Psoas muscle (tissue), 8 donors: ENCODE measurements at regions of chr17 and their contacts with region 1.

Region 1: DNA sequence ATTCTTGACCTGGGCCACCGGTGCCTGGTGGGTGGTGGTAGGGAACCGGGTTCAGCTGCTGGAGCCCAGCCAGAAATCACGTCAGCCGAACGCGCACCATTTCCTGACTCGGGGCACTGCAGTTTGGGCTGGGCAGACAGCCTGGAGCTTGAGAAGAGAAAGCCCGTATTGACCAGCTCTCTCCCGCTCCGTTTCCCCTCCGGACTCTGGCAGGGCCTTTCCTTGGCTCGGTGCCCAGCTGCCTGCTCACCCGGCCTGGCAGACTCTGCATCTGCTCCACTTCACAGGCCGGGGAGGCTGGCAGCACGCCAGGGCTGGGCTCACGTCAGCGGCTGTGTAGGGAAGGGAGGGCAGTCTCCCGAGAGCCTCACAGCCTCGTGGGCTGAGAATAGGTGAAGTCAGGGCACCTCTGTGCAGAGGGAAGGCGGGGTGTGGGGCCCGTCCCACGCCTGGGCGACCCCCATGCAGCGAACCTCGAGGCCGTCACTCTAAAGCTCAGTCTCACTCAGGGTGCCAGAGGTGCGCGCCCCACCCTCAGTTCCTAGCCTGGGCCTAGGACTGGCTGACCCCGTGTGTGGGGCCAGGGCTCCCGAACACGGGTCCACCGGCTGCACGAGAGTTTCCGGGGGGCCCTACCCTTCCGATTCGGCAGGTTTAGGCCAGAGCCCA is 59.1 kb downstream of the OR1D5 start:
- DNase-seq: peak; percentile 98 to 99
- ATAC-seq: peak; percentile 96 to 99 (median 98)
- H3K4me3 ChIP-seq: peak overlapping the region; percentile 40
- H3K27ac ChIP-seq: peak overlapping the region; percentile 57
- H3K4me1 ChIP-seq: peaks cover 9% of the 10 kb centered on the region
- H3K27me3 ChIP-seq: no peaks in the 10 kb centered on the region
- CTCF ChIP-seq: no peak

Region 2: GRCh38 chr17:2421315-2422147 is 582.7 kb before region 1 on chr17:
- intact Hi-C with region 1: loop called in 1 of 2 experiments (anchors 10 kb)
- DNase-seq: peak in 1 of 2 donors; percentile 73
- ATAC-seq: peak; percentile 62 to 74 (median 66)
- H3K4me3 ChIP-seq: no peak overlapping the region
- H3K27ac ChIP-seq: no peak overlapping the region
- H3K4me1 ChIP-seq: peaks cover 20% of the 10 kb centered on the region
- H3K27me3 ChIP-seq: no peaks in the 10 kb centered on the region
- CTCF ChIP-seq: peak; percentile 38

Region 3: GRCh38 chr17:2867441-2868424 is 136.5 kb before region 1 on chr17:
- intact Hi-C with region 1: no loop called
- DNase-seq: peak in 1 of 2 donors; percentile 49
- ATAC-seq: peak in 3 of 4 donors; percentile 49 to 82 (median 63)
- H3K4me3 ChIP-seq: no peak overlapping the region
- H3K27ac ChIP-seq: no peak overlapping the region
- H3K4me1 ChIP-seq: no peaks in the 10 kb centered on the region
- H3K27me3 ChIP-seq: peaks cover 0 to 11% (median 9%) of the 10 kb centered on the region in 3 donors
- CTCF ChIP-seq: no peak

Region 4: GRCh38 chr17:2954898-2955445 is 49.3 kb before region 1 on chr17:
- intact Hi-C with region 1: no loop called
- DNase-seq: no peak
- ATAC-seq: peak in 1 of 4 donors; percentile 48
- H3K4me3 ChIP-seq: no peak overlapping the region
- H3K27ac ChIP-seq: no peak overlapping the region
- H3K4me1 ChIP-seq: no peaks in the 10 kb centered on the region
- H3K27me3 ChIP-seq: peaks cover 0 to 3% (median 0%) of the 10 kb centered on the region in 3 donors
- CTCF ChIP-seq: no peak